ENCODE measurements at regions of chr17 and their contacts with region 1.

Region 1: DNA sequence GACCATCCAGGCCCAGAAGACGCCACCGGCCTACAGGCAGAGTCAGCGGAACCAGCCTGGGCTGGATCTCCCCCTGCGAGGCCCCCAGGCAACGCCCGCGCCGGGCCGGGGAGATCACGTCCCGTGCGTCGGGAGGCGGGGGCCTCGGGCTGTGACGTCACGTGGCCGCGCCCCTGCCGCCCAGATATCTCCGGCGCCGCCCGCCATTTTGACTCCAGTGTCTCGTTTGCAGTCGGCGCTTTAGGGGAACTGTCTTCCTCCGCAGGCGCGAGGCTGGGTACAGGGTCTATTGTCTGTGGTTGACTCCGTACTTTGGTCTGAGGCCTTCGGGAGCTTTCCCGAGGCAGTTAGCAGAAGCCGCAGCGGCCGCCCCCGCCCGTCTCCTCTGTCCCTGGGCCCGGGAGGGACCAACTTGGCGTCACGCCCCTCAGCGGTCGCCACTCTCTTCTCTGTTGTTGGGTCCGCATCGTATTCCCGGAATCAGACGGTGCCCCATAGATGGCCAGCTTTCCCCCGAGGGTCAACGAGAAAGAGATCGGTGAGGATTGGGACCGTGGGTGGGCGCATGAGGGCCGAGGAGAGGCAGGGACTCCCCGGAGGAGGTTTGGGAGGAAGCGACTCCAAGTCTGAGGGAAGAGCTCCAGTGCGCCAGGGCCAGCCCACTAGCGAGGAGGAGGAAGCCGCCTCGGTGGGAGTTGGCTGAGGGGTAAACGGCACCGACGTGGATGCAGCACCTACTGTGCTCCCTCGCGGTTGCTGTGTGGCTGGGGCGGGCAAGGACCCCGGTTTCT is at the start of gene WSB1:
- DNase-seq: peak; percentile 86 to 97 (median 92)
- ATAC-seq: peak; percentile 80
- H3K4me3 ChIP-seq: peak within 1 kb of the TSS; percentile 71
- H3K4me3 Mint-ChIP-seq: peak within 1 kb of the TSS; percentile 98
- H3K27ac ChIP-seq: peak within 1 kb of the TSS; percentile 97 to 99
- H3K27ac Mint-ChIP-seq: peak within 1 kb of the TSS; percentile 96
- H3K4me1 ChIP-seq: peaks cover 36% of the 10 kb centered on the region
- H3K4me1 Mint-ChIP-seq: peaks cover 44% of the 10 kb centered on the region
- H3K27me3 ChIP-seq: no peaks in the 10 kb centered on the region
- H3K27me3 Mint-ChIP-seq: no peaks in the 10 kb centered on the region
- CTCF ChIP-seq: no peak
- total RNA-seq, gene WSB1: 99.4 to 104 TPM

Region 2: DNA sequence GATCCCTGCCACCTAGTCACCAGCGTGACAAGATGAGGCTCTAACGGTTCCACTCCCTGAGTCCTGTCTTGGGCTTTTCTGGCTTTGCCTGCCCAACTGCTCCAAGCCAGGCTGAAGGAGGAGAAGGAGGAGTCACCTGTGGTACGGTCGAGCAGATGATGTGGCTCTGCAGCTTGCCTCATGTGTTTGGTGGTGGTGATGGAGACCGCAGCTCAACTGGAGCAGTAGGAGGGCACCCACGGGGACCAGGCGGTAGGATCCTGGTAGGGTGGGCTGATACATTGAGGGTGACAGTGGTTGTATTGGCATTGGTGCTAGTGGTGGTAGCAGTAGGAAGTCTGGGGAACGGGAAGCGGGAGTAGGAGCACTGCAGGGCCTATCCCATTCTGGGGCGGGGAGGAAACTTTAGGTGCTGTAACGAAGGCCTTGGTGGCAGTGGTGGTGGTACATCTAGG is 203.0 kb before region 1 on chr17:
- CTCF ChIA-PET with region 1: no interaction called
- POLR2A ChIA-PET with region 1: no interaction called
- intact Hi-C with region 1: no loop called
- DNase-seq: no peak
- ATAC-seq: no peak
- H3K4me3 ChIP-seq: no peak overlapping the region
- H3K4me3 Mint-ChIP-seq: no peak overlapping the region
- H3K27ac ChIP-seq: no peak overlapping the region
- H3K27ac Mint-ChIP-seq: no peak overlapping the region
- H3K4me1 ChIP-seq: no peaks in the 10 kb centered on the region
- H3K4me1 Mint-ChIP-seq: no peaks in the 10 kb centered on the region
- H3K27me3 ChIP-seq: no peaks in the 10 kb centered on the region
- H3K27me3 Mint-ChIP-seq: peaks cover 10% of the 10 kb centered on the region
- CTCF ChIP-seq: no peak

Region 3: GRCh38 chr17:27276653-27277156 is 17.4 kb before region 1 on chr17:
- CTCF ChIA-PET with region 1: interaction called, 3 read pairs
- POLR2A ChIA-PET with region 1: interaction called, 16 read pairs
- intact Hi-C with region 1: no loop called
- DNase-seq: no peak
- ATAC-seq: no peak
- H3K4me3 ChIP-seq: no peak overlapping the region
- H3K4me3 Mint-ChIP-seq: no peak overlapping the region
- H3K27ac ChIP-seq: no peak overlapping the region
- H3K27ac Mint-ChIP-seq: no peak overlapping the region
- H3K4me1 ChIP-seq: peaks cover 2% of the 10 kb centered on the region
- H3K4me1 Mint-ChIP-seq: no peaks in the 10 kb centered on the region
- H3K27me3 ChIP-seq: no peaks in the 10 kb centered on the region
- H3K27me3 Mint-ChIP-seq: no peaks in the 10 kb centered on the region
- CTCF ChIP-seq: no peak

Region 4: DNA sequence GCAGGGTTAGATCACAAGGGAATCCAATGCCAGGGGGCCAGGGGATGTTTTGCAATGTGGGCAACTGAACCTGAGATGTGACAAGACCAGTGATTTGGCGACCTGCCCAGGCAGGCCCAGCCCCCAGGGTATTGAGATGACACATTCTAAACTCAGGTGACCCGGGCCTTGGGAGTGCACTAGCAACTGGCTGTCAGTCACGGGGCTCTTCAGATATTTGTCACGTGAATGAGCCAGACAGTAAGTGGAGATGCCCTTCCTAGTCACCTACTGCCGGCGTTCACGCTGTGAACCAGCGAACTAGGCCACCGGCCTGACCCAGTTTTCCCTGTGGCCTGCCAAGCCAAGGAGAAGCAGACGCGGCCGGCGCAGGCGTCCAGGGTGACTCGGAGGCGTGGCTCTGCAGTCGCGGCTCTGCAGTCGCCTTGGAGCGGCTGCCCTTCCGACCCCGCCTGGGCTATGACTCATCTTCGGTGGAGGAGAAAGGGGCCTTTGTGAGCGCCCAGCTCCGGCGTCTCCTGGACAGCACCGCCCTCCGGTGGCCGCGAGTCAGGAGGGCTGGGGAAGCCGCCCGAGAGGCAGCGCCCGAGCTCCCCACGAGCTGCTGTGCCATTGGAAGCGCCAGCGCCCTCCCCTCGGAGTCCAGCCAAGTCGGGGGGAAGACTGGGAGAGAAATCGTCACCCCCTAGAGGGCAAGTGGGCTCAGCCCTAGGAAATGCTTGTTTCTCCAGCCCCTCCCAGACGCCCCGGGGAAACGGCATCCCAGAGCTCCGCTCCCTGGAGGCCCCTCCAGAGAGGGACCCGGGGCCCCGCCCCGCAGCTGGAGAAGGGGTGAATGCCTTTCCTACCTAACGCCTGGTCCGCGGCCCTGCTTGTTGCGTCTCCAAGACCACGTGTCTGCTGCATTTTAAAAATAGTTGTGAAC is 38.7 kb after region 1 on chr17:
- CTCF ChIA-PET with region 1: interaction called, 33 read pairs
- POLR2A ChIA-PET with region 1: interaction called, 41 read pairs
- intact Hi-C with region 1: loop called (anchors 1 kb)
- DNase-seq: peak; percentile 73 to 95 (median 88)
- ATAC-seq: peak; percentile 84
- H3K4me3 ChIP-seq: peak overlapping the region; percentile 64
- H3K4me3 Mint-ChIP-seq: peak overlapping the region; percentile 88
- H3K27ac ChIP-seq: peak overlapping the region in 1 of 2 donors; percentile 76
- H3K27ac Mint-ChIP-seq: peak overlapping the region; percentile 88
- H3K4me1 ChIP-seq: peaks cover 19% of the 10 kb centered on the region
- H3K4me1 Mint-ChIP-seq: peaks cover 26% of the 10 kb centered on the region
- H3K27me3 ChIP-seq: no peaks in the 10 kb centered on the region
- H3K27me3 Mint-ChIP-seq: no peaks in the 10 kb centered on the region
- CTCF ChIP-seq: peak; percentile 74

Region 5: GRCh38 chr17:27473748-27474609 is 179.9 kb after region 1 on chr17:
- CTCF ChIA-PET with region 1: no interaction called
- POLR2A ChIA-PET with region 1: interaction called, 14 read pairs
- intact Hi-C with region 1: no loop called
- DNase-seq: peak in 11 of 14 experiments; percentile 25 to 91 (median 57)
- ATAC-seq: no peak
- H3K4me3 ChIP-seq: peak overlapping the region; percentile 33
- H3K4me3 Mint-ChIP-seq: peak overlapping the region; percentile 75
- H3K27ac ChIP-seq: peak overlapping the region; percentile 61 to 92
- H3K27ac Mint-ChIP-seq: peak overlapping the region; percentile 95
- H3K4me1 ChIP-seq: peaks cover 72% of the 10 kb centered on the region
- H3K4me1 Mint-ChIP-seq: peaks cover 65% of the 10 kb centered on the region
- H3K27me3 ChIP-seq: no peaks in the 10 kb centered on the region
- H3K27me3 Mint-ChIP-seq: no peaks in the 10 kb centered on the region
- CTCF ChIP-seq: no peak

Region 6: GRCh38 chr17:28041068-28041843 is 747.2 kb after region 1 on chr17:
- CTCF ChIA-PET with region 1: no interaction called
- POLR2A ChIA-PET with region 1: no interaction called
- intact Hi-C with region 1: loop called in 1 of 2 experiments (anchors 10 kb)
- DNase-seq: peak; percentile 97 to 100 (median 99)
- ATAC-seq: peak; percentile 92
- H3K4me3 ChIP-seq: peak overlapping the region; percentile 84
- H3K4me3 Mint-ChIP-seq: peak overlapping the region; percentile 93
- H3K27ac ChIP-seq: peak overlapping the region; percentile 52 to 69
- H3K27ac Mint-ChIP-seq: peak overlapping the region; percentile 82
- H3K4me1 ChIP-seq: peaks cover 30% of the 10 kb centered on the region
- H3K4me1 Mint-ChIP-seq: peaks cover 57% of the 10 kb centered on the region
- H3K27me3 ChIP-seq: no peaks in the 10 kb centered on the region
- H3K27me3 Mint-ChIP-seq: no peaks in the 10 kb centered on the region
- CTCF ChIP-seq: no peak